AG04450 (cell line): ENCODE measurements at regions of chr9 and their contacts with region 1.

Region 1: DNA sequence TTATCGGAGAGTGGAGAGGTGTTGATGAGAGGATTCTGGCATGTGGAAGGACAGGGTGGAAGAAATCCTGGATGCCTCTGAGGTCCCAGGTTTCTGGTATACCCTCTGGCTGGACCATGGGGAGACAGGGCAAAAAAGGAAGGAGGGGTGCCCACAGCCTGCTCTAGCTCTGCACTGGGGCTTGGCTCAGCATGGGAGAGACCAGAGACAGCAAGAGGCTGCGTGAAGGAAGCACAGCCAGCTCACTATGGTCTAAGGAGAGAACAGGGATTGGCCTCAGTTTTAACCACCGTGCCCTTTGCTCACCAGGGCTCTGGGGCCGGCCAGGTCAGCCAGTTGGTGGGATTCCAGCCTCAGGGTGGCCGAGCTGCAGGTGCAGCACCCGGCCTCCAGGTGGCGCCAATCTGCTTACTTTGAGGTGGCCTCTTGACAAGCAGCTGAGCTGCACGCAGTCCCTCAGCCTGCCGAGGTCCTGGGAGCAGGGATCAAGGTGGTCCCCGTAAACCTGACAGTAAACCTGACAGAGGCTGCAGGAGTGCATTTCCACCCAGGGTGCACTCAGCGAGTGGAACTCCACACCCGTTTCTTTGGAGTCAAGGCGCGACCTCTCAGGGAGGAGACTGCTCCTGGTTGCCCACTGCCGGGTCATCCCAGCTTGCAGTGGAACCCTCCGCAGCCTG is 25.0 kb upstream of the SPTLC1 start:
- DNase-seq: no peak
- H3K4me3 ChIP-seq: peak overlapping the region; percentile 86
- H3K27ac ChIP-seq: peak overlapping the region; percentile 39
- H3K27me3 ChIP-seq: no peaks in the 10 kb centered on the region
- CTCF ChIP-seq: peak; percentile 92

Region 2: DNA sequence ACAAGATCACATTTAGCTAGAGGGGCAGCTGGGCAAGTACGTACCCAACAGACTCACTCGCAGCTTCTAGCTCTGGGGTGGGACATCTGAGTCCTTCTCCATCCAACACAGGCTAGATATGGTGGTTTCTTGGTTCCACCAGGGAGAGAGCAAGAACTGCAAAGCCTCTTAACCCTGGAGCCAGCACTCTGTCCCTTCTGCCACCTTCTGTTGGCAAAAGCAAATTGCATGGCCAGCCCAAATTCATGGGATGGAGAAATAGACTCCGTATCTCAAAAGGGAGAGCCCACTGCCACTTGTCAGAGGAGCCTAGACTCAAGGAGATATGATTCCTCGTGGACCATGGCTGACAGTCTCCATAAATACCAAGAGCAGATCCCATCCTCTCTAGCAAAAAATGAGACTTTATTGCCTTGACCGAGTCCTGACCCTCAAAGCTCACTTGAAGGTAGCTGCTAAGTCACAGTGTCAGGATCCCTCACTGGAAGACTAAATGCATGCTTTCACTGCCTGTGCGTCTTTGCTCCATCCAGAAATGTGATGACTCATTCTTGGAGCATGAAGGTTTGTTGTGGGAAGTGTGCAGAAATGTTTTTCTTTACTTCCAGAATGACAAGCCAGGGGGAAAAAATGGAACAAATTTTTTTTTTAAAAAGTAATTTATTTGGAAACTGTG is 161.3 kb before region 1 on chr9:
- CTCF ChIA-PET with region 1: no interaction called
- POLR2A ChIA-PET with region 1: no interaction called
- DNase-seq: peak; percentile 77
- H3K4me3 ChIP-seq: no peak overlapping the region
- H3K27ac ChIP-seq: peak overlapping the region; percentile 71
- H3K27me3 ChIP-seq: peaks cover 2% of the 10 kb centered on the region
- CTCF ChIP-seq: peak; percentile 40

Region 3: GRCh38 chr9:92122800-92123199 is 17.4 kb before region 1 on chr9:
- CTCF ChIA-PET with region 1: interaction called, 21 read pairs
- POLR2A ChIA-PET with region 1: no interaction called
- DNase-seq: no peak
- H3K4me3 ChIP-seq: no peak overlapping the region
- H3K27ac ChIP-seq: no peak overlapping the region
- H3K27me3 ChIP-seq: no peaks in the 10 kb centered on the region
- CTCF ChIP-seq: no peak

Region 4: GRCh38 chr9:92223758-92224157 is 83.5 kb after region 1 on chr9:
- CTCF ChIA-PET with region 1: interaction called, 10 read pairs
- POLR2A ChIA-PET with region 1: no interaction called
- DNase-seq: no peak
- H3K4me3 ChIP-seq: no peak overlapping the region
- H3K27ac ChIP-seq: no peak overlapping the region
- H3K27me3 ChIP-seq: no peaks in the 10 kb centered on the region
- CTCF ChIP-seq: no peak

Region 5: GRCh38 chr9:92242260-92243136 is 102.3 kb after region 1 on chr9:
- CTCF ChIA-PET with region 1: interaction called, 370 read pairs
- POLR2A ChIA-PET with region 1: interaction called, 15 read pairs
- DNase-seq: peak; percentile 39
- H3K4me3 ChIP-seq: no peak overlapping the region
- H3K27ac ChIP-seq: peak overlapping the region; percentile 81
- H3K27me3 ChIP-seq: no peaks in the 10 kb centered on the region
- CTCF ChIP-seq: peak; percentile 62

Region 6: GRCh38 chr9:92265159-92265558 is 124.9 kb after region 1 on chr9:
- CTCF ChIA-PET with region 1: interaction called, 52 read pairs
- POLR2A ChIA-PET with region 1: no interaction called
- DNase-seq: no peak
- H3K4me3 ChIP-seq: no peak overlapping the region
- H3K27ac ChIP-seq: no peak overlapping the region
- H3K27me3 ChIP-seq: no peaks in the 10 kb centered on the region
- CTCF ChIP-seq: no peak

Region 7: DNA sequence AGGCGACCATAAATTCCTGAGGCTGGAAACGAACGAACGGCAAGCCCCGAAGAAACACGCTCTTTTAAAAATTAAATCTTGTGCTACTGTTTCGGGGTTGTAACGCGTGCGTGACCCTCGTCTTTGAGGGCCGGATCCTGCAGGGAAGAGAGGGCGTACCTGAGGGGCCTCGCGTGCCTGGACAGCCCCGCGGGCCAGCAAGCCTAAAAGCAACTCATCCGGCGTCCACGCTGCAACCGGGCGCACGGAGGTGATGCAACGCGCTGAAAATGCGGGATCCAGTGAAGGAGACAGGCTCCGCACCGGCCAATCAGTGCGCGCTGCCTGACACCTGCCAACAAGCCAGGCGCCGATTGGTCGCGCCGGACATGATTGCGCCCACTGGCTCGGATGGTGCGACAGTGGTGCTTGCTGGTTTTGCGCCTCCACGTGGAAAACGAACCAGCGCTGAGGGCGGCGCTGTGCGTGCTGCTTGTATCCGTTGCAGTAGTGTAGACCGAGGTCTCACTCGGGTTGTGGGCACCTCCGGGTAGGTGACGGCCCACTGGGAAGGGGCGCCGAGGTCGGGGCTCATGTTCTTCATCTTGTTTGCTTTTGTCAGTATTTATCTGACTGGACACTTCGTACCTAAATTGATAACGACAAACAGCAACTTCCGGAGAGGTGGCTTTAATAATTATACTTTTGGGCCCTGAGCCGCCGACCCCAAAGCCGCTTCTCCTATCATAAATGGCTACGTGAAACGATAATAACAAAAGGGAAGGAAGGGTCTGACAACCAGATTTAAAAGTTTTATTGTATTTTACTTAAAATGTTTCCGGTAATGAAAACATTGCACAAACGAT is 153.5 kb after region 1 on chr9 and contains the start of gene IARS1:
- CTCF ChIA-PET with region 1: interaction called, 35 read pairs
- POLR2A ChIA-PET with region 1: interaction called, 3 read pairs
- DNase-seq: peak; percentile 97
- H3K4me3 ChIP-seq: peak within 1 kb of the TSS; percentile 88
- H3K27ac ChIP-seq: peak within 1 kb of the TSS; percentile 91
- H3K27me3 ChIP-seq: no peaks in the 10 kb centered on the region
- CTCF ChIP-seq: peak; percentile 43
- polyA plus RNA-seq, gene IARS1: 206 and 217 TPM in 2 replicates

Region 8: GRCh38 chr9:92325269-92325990 is 185.2 kb after region 1 on chr9 and contains the starts of genes CENPP and NOL8:
- CTCF ChIA-PET with region 1: interaction called, 21 read pairs
- POLR2A ChIA-PET with region 1: interaction called, 3 read pairs
- DNase-seq: peak; percentile 59
- H3K4me3 ChIP-seq: peak within 1 kb of the TSS; percentile 95
- H3K27ac ChIP-seq: peak within 1 kb of the TSS; percentile 99
- H3K27me3 ChIP-seq: no peaks in the 10 kb centered on the region
- CTCF ChIP-seq: no peak
- polyA plus RNA-seq, gene CENPP: 2.2 and 4.4 TPM in 2 replicates
- polyA plus RNA-seq, gene NOL8: 19.1 and 27.9 TPM in 2 replicates